CD8-positive, alpha-beta memory T cell (primary cell): ENCODE measurements at regions of chr19 and their contacts with region 1.

Region 1: DNA sequence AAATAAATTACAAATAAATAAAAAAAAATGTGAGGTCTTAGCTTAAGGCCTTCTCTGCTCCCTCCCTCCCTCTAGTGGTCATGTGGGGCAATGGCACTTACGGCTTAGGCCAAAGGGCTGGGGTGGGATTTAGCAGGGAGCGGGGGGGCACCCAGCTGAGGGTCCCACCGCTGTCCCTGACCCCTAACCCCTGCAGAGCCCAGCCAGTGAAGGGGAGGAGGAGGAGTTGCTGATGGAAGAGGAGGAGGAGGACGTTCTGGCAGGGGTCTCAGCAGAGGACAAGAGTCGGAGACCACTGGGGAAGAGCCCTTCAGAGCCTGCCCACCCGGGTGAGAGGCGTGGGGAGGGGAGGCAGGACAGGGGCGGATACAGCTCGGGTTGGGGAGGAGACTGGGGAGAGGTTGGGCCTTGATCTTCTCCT is 9.3 kb downstream of the MPND start:
- DNase-seq: peak in 4 of 5 donors; percentile 50 to 77 (median 52)
- H3K4me3 ChIP-seq: no peak overlapping the region
- H3K4me3 Mint-ChIP-seq: no peak overlapping the region
- H3K27ac ChIP-seq: no peak overlapping the region
- H3K27ac Mint-ChIP-seq: peak overlapping the region in 3 of 8 donors; percentile 22 to 87 (median 46)
- H3K4me1 ChIP-seq: no peaks in the 10 kb centered on the region
- H3K4me1 Mint-ChIP-seq: peaks cover 0 to 3% (median 2%) of the 10 kb centered on the region in 3 donors
- H3K27me3 ChIP-seq: no peaks in the 10 kb centered on the region
- H3K27me3 Mint-ChIP-seq: no peaks in the 10 kb centered on the region

Region 2: DNA sequence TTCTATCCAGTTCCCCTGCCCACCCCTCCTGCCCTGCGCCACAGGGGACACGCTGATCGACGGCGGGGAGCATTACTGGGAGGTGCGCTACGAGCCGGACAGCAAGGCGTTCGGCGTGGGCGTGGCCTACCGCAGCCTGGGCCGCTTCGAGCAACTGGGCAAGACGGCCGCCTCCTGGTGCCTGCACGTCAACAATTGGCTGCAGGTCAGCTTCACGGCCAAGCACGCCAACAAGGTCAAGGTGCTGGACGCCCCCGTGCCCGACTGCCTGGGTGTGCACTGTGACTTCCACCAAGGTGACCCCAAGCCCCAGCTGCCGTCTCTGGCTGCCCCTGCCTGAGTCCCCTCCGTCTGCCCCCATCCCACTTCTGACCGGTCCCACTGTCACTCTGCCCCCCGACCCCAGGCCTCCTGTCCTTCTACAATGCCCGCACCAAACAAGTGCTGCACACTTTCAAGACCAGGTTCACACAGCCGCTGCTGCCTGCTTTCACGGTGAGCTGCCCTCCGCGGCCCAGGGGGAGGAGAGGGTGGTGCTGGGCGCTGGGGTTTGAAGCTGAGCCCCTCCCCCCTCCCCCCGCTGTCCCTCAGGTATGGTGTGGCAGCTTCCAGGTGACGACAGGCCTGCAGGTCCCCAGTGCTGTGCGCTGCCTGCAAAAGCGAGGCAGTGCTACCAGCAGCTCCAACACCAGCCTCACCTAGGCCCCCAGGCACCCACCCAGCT is 29.6 kb before region 1 on chr19:
- CTCF ChIA-PET with region 1: interaction called, 16 read pairs
- POLR2A ChIA-PET with region 1: interaction called, 5 read pairs
- DNase-seq: no peak
- H3K4me3 ChIP-seq: no peak overlapping the region
- H3K4me3 Mint-ChIP-seq: no peak overlapping the region
- H3K27ac ChIP-seq: no peak overlapping the region
- H3K27ac Mint-ChIP-seq: no peak overlapping the region
- H3K4me1 ChIP-seq: peaks cover 11% of the 10 kb centered on the region
- H3K4me1 Mint-ChIP-seq: peaks cover 16 to 21% (median 17%) of the 10 kb centered on the region in 3 donors
- H3K27me3 ChIP-seq: no peaks in the 10 kb centered on the region
- H3K27me3 Mint-ChIP-seq: peaks cover 0 to 4% of the 10 kb centered on the region in 2 donors

Region 3: DNA sequence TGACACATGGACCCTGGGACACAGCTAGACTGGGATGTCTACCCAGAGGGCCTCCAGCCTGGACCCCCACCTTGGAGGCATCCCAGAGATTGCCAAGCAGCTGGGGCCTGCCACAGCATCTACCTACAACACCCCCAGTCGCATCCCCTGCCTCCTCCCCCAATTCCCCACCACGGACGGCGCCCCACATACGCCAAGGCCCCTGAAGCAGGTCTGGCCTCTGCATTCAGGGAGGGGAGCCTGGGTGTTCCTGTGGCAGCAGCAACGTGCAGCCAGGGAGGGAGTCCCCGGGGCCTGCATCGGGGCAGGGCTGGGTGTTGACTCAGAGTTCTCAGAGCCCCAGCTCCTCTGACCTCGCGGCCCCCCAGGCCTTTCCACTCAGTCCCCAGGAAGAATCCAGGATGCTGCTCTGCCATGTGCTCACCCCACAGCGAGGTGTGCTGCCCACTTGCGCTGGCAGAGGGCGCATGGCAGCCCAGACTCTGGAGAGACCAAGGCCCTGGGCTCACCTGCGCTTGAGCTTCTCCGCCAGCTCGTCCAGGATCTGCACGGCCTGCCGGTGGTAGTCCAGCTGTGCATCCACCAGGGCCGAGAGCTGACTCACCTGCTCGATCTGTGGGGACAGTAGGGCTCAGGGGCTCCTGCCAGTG is 10.3 kb after region 1 on chr19:
- CTCF ChIA-PET with region 1: interaction called, 14 read pairs
- POLR2A ChIA-PET with region 1: interaction called, 4 read pairs
- DNase-seq: no peak
- H3K4me3 ChIP-seq: no peak overlapping the region
- H3K4me3 Mint-ChIP-seq: no peak overlapping the region
- H3K27ac ChIP-seq: no peak overlapping the region
- H3K27ac Mint-ChIP-seq: no peak overlapping the region
- H3K4me1 ChIP-seq: no peaks in the 10 kb centered on the region
- H3K4me1 Mint-ChIP-seq: peaks cover 2 to 3% (median 3%) of the 10 kb centered on the region in 3 donors
- H3K27me3 ChIP-seq: no peaks in the 10 kb centered on the region
- H3K27me3 Mint-ChIP-seq: no peaks in the 10 kb centered on the region

Region 4: DNA sequence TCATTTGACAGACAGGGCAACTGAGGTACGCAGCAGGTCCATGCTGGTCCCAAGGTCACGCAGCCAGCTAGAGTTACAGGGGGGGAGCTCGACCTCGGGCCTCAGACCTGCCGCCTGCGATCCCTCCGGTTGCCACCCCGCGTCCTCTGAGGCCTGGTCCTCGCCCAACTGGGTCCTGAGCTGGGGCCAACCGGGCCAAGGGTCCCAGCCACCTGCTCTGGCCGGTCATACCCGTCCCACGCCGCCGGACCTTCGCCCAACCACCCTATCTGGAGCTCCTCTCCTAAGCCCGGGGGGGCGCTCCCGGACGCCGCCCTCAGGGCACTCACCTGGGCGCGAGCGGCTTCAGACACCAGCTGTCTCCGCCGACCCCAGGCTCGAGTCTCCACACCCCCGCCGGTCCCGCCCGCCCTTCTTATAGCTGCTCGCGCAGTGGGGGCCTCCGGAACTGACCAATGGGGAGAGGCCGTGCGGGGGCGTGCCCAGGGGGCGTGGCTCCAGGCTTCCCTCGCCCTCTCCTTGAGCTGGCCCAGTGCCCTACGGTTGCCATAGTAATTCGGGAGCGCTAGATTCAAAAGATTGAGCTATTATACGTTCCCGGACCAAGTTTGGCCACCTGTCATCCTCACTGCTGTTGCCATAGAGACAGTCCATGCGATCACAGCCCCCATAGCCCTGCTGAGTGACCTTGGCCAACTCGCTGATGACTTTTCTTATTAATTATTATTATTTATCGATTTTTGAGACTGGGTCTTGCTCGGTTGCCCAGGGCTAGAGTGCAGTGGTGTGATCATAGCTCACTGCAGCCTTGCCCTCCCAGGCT is 182.3 kb after region 1 on chr19 and contains the start of gene PLIN5:
- CTCF ChIA-PET with region 1: no interaction called
- POLR2A ChIA-PET with region 1: no interaction called
- DNase-seq: peak in 4 of 5 donors; percentile 27 to 59 (median 47)
- H3K4me3 ChIP-seq: no peak within 1 kb of the TSS
- H3K4me3 Mint-ChIP-seq: peak within 1 kb of the TSS in 5 of 7 donors; percentile 15 to 61 (median 34)
- H3K27ac ChIP-seq: no peak within 1 kb of the TSS
- H3K27ac Mint-ChIP-seq: no peak within 1 kb of the TSS
- H3K4me1 ChIP-seq: peaks cover 4% of the 10 kb centered on the region
- H3K4me1 Mint-ChIP-seq: peaks cover 4 to 7% (median 5%) of the 10 kb centered on the region in 3 donors
- H3K27me3 ChIP-seq: no peaks in the 10 kb centered on the region
- H3K27me3 Mint-ChIP-seq: peaks cover 5 to 26% of the 10 kb centered on the region in 2 donors
- total RNA-seq, gene PLIN5: not detected